ENCODE measurements at regions of chr15 and their contacts with region 1.

Region 1: GRCh38 chr15:65792130-65792987 is at the start of gene DENND4A:
- DNase-seq: peak; percentile 95 to 99 (median 98)
- ATAC-seq: peak; percentile 91
- H3K4me3 ChIP-seq: peak within 1 kb of the TSS; percentile 91
- H3K4me3 Mint-ChIP-seq: peak within 1 kb of the TSS; percentile 89 to 99 (median 93)
- H3K27ac ChIP-seq: peak within 1 kb of the TSS; percentile 99
- H3K27ac Mint-ChIP-seq: peak within 1 kb of the TSS; percentile 94 to 100 (median 98)
- H3K4me1 ChIP-seq: peaks cover 24 to 33% of the 10 kb centered on the region in 2 donors
- H3K4me1 Mint-ChIP-seq: peaks cover 18 to 66% (median 49%) of the 10 kb centered on the region in 7 donors
- H3K27me3 ChIP-seq: no peaks in the 10 kb centered on the region
- H3K27me3 Mint-ChIP-seq: no peaks in the 10 kb centered on the region
- total RNA-seq, gene DENND4A: 40.0 to 67.9 (median 64.6) TPM

Region 2: DNA sequence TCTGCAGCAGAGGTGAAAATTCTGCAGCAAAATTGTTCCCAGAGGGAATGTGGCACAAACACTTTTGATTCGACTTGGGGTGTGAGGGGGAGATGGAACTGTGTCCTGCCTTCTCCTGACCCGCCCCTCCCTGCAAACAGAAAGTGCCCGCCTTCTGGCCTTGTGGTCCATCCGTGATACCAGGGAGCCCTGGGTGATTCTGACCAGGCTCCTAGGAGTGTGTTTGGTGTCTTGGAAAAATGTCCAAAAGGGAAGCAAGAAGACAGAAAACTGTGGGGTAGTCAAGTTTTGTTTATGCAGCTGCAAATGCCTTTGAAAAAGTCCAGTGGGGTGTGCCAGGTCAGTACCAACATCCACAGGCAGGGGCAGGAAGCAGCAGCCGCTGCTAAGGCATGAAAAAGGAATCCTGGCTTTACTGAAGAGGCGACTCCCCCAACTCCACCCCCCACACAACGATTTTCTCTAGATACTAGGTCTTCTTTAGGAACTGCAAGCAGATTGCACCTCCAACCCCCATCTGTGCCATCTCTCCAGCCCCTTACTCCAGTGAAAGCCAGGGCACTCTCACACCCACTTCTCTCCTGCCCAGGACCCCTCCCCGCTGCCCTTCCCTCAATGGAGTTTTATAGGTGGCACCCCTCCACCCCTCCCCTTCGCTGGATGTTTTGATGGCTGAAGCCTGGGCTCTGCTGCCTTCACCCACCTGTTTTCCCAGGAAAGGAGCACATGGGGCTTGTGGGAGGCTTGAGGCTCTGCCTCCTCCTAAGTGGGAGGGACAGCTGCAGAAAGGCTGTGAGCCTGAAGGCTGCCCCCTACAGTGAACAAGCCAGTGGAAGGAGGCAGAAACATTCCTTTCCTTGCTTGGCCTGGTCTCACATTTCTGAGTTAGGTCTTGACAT is 1876.2 kb before region 1 on chr15:
- CTCF ChIA-PET with region 1: no interaction called
- POLR2A ChIA-PET with region 1: no interaction called
- intact Hi-C with region 1: no loop called
- DNase-seq: no peak
- ATAC-seq: no peak
- H3K4me3 ChIP-seq: no peak overlapping the region
- H3K4me3 Mint-ChIP-seq: no peak overlapping the region
- H3K27ac ChIP-seq: no peak overlapping the region
- H3K27ac Mint-ChIP-seq: peak overlapping the region in 1 of 9 donors; percentile 88
- H3K4me1 ChIP-seq: peaks cover 0 to 16% of the 10 kb centered on the region in 2 donors
- H3K4me1 Mint-ChIP-seq: peaks cover 11 to 26% (median 15%) of the 10 kb centered on the region in 7 donors
- H3K27me3 ChIP-seq: no peaks in the 10 kb centered on the region
- H3K27me3 Mint-ChIP-seq: peaks cover 0 to 8% (median 0%) of the 10 kb centered on the region in 5 donors

Region 3: DNA sequence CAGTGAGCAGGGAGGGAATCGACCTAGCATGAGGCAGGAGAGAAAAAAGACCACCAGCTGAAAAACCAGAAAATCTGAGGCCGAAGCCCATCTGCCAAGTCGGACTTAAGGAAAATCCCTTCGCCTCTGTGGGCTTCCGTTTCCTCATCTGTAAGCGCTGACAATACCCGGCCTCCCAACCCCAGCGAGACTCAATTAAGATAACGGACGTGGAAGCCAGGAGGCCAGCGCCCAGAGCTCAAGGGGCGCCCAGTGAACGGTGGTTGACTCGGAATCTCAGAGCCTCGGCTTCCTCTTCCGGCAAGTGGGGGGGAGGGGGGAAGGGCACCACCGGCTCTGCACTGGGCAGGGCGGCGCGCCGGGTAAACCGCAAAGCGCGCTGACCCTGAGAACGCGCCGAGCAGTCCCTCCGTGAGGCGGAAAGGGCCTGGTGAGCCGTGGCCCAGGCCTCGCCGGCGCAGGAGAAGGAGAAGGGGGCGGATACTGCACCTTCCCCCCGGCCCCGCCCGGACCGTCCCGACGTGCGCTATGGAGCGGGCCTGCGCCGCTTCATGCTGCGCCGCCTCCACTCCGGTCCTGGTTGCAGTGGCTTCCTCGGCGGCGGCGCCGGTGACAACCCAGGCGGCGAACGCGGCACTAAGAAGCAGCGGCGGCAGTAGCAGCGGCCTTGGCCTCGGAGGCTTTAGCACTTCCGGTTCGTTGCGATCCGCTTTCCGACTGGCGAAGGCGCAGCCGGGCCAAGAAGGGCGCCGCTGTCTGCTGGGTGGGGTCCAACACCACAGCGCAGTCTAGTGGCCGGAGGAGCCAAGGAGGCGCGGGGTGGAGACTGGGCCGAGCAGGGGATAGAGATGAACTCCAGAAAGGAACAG is 275.1 kb before region 1 on chr15 and contains the start of gene DPP8:
- CTCF ChIA-PET with region 1: no interaction called
- POLR2A ChIA-PET with region 1: no interaction called
- intact Hi-C with region 1: loop called in 1 of 2 experiments (anchors 1 kb)
- DNase-seq: peak; percentile 88 to 96 (median 92)
- ATAC-seq: peak; percentile 98
- H3K4me3 ChIP-seq: peak within 1 kb of the TSS; percentile 75
- H3K4me3 Mint-ChIP-seq: peak within 1 kb of the TSS; percentile 93 to 100 (median 96)
- H3K27ac ChIP-seq: peak within 1 kb of the TSS; percentile 83
- H3K27ac Mint-ChIP-seq: peak within 1 kb of the TSS; percentile 86 to 99 (median 94)
- H3K4me1 ChIP-seq: peaks cover 22 to 25% of the 10 kb centered on the region in 2 donors
- H3K4me1 Mint-ChIP-seq: peaks cover 30 to 51% (median 44%) of the 10 kb centered on the region in 7 donors
- H3K27me3 ChIP-seq: no peaks in the 10 kb centered on the region
- H3K27me3 Mint-ChIP-seq: no peaks in the 10 kb centered on the region
- total RNA-seq, gene DPP8: 38.4 to 54.6 (median 40.8) TPM

Region 4: GRCh38 chr15:65757256-65757655 is 35.1 kb before region 1 on chr15:
- CTCF ChIA-PET with region 1: no interaction called
- POLR2A ChIA-PET with region 1: interaction called, 6 read pairs
- intact Hi-C with region 1: loop called in 1 of 2 experiments (anchors 5 kb)
- DNase-seq: no peak
- ATAC-seq: no peak
- H3K4me3 ChIP-seq: no peak overlapping the region
- H3K4me3 Mint-ChIP-seq: no peak overlapping the region
- H3K27ac ChIP-seq: no peak overlapping the region
- H3K27ac Mint-ChIP-seq: no peak overlapping the region
- H3K4me1 ChIP-seq: peaks cover 4 to 5% of the 10 kb centered on the region in 2 donors
- H3K4me1 Mint-ChIP-seq: peaks cover 3 to 21% (median 17%) of the 10 kb centered on the region in 7 donors
- H3K27me3 ChIP-seq: no peaks in the 10 kb centered on the region
- H3K27me3 Mint-ChIP-seq: no peaks in the 10 kb centered on the region

Region 5: DNA sequence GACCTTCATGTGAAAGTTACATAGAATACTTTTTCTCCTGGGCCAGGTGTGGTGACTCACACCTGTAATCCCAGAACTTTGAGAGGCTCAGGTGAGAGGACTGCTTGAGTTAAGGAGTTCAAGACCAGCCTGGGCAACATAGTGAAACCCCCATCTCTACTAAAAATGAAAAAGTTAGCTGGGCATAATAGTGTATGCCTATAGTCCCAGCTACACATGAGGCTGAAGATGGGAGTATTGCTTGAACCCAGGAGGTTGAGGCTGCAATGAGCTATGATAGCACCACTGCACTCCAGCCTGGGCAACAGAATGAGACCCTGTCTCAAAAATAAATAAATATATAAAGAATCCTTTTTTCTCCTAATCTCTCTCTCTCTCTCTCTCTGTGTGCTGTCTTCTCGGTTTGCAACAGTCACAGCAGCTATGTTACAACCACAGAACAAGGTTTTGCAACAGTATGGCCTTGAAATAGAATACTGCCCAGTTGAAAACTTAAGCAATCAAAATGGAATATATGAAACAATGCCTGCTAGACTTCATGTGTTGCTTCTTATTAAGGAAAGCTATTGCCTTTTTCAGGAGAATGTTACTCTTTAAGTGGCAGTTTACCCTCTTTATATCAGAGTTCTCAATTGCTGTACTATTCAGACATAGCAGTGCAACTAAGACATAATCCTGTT is 12.0 kb after region 1 on chr15:
- CTCF ChIA-PET with region 1: interaction called, 7 read pairs
- POLR2A ChIA-PET with region 1: interaction called, 47 read pairs
- intact Hi-C with region 1: loop called in 1 of 2 experiments (anchors 1 kb)
- DNase-seq: no peak
- ATAC-seq: peak; percentile 67
- H3K4me3 ChIP-seq: no peak overlapping the region
- H3K4me3 Mint-ChIP-seq: no peak overlapping the region
- H3K27ac ChIP-seq: no peak overlapping the region
- H3K27ac Mint-ChIP-seq: peak overlapping the region in 6 of 9 donors; percentile 1 to 98 (median 80)
- H3K4me1 ChIP-seq: peaks cover 20 to 27% of the 10 kb centered on the region in 2 donors
- H3K4me1 Mint-ChIP-seq: peaks cover 4 to 42% (median 35%) of the 10 kb centered on the region in 7 donors
- H3K27me3 ChIP-seq: no peaks in the 10 kb centered on the region
- H3K27me3 Mint-ChIP-seq: no peaks in the 10 kb centered on the region

Region 6: GRCh38 chr15:65818927-65819562 is 26.7 kb after region 1 on chr15:
- CTCF ChIA-PET with region 1: interaction called, 7 read pairs
- POLR2A ChIA-PET with region 1: interaction called, 50 read pairs
- intact Hi-C with region 1: loop called (anchors 1 kb)
- DNase-seq: peak in 7 of 9 donors; percentile 75 to 95 (median 90)
- ATAC-seq: peak; percentile 95
- H3K4me3 ChIP-seq: peak overlapping the region; percentile 9
- H3K4me3 Mint-ChIP-seq: peak overlapping the region; percentile 21 to 83 (median 76)
- H3K27ac ChIP-seq: peak overlapping the region; percentile 91
- H3K27ac Mint-ChIP-seq: peak overlapping the region; percentile 93 to 100 (median 98)
- H3K4me1 ChIP-seq: peaks cover 23 to 39% of the 10 kb centered on the region in 2 donors
- H3K4me1 Mint-ChIP-seq: peaks cover 33 to 69% (median 52%) of the 10 kb centered on the region in 7 donors
- H3K27me3 ChIP-seq: no peaks in the 10 kb centered on the region
- H3K27me3 Mint-ChIP-seq: no peaks in the 10 kb centered on the region

Region 7: DNA sequence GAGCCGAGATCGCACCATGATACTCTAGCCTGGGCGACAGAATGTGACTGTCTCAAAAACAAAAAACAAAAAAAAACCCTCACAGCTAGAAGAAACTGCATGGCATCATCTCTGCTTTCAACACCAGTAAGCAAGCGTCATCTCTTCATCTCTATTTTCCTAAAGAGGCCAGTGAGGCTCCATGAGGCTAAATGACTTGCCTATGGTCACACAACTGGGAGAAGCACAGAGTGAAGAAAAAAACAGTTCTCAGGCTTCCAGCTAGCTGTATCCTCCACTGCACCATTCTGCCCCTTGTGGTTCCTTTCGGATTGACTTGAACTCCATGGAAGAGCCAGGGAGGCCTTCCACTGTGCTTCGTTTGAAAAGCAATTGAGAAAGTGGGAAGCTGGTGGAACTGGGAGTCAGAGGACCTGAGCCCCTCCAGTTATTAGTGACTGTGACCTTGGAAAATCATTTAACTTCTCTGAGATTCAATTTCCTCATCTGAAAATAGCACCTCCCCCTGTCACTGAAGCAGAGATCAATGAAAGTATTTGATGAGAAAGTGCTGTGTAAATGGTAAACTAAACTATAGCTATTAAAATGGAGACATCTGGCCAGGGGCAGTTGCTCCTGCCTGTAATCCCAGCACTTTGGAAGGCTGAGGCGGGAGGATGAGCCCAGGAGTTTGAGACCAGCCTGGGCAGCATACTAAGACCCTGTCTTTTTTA is 31.8 kb after region 1 on chr15:
- CTCF ChIA-PET with region 1: interaction called, 6 read pairs
- POLR2A ChIA-PET with region 1: interaction called, 50 read pairs
- intact Hi-C with region 1: loop called (anchors 1 kb)
- DNase-seq: peak in 1 of 9 donors; percentile 34
- ATAC-seq: no peak
- H3K4me3 ChIP-seq: no peak overlapping the region
- H3K4me3 Mint-ChIP-seq: no peak overlapping the region
- H3K27ac ChIP-seq: no peak overlapping the region
- H3K27ac Mint-ChIP-seq: peak overlapping the region in 7 of 9 donors; percentile 10 to 78 (median 50)
- H3K4me1 ChIP-seq: peaks cover 33 to 47% of the 10 kb centered on the region in 2 donors
- H3K4me1 Mint-ChIP-seq: peaks cover 42 to 77% (median 56%) of the 10 kb centered on the region in 7 donors
- H3K27me3 ChIP-seq: no peaks in the 10 kb centered on the region
- H3K27me3 Mint-ChIP-seq: no peaks in the 10 kb centered on the region

Region 8: GRCh38 chr15:65856821-65857455 is 64.6 kb after region 1 on chr15:
- CTCF ChIA-PET with region 1: interaction called, 3 read pairs
- POLR2A ChIA-PET with region 1: no interaction called
- intact Hi-C with region 1: loop called in 1 of 2 experiments (anchors 1 kb)
- DNase-seq: peak; percentile 54 to 83 (median 77)
- ATAC-seq: peak; percentile 94
- H3K4me3 ChIP-seq: no peak overlapping the region
- H3K4me3 Mint-ChIP-seq: no peak overlapping the region
- H3K27ac ChIP-seq: no peak overlapping the region
- H3K27ac Mint-ChIP-seq: peak overlapping the region in 2 of 9 donors; percentile 21 to 69
- H3K4me1 ChIP-seq: no peaks in the 10 kb centered on the region
- H3K4me1 Mint-ChIP-seq: peaks cover 0 to 17% (median 13%) of the 10 kb centered on the region in 7 donors
- H3K27me3 ChIP-seq: no peaks in the 10 kb centered on the region
- H3K27me3 Mint-ChIP-seq: peaks cover 0 to 15% (median 0%) of the 10 kb centered on the region in 5 donors

Region 9: GRCh38 chr15:67240235-67241131 is 1448.1 kb after region 1 on chr15:
- CTCF ChIA-PET with region 1: no interaction called
- POLR2A ChIA-PET with region 1: no interaction called
- intact Hi-C with region 1: no loop called
- DNase-seq: peak in 3 of 9 donors; percentile 9 to 30 (median 12)
- ATAC-seq: peak; percentile 70
- H3K4me3 ChIP-seq: peak overlapping the region; percentile 23
- H3K4me3 Mint-ChIP-seq: peak overlapping the region in 9 of 10 donors; percentile 18 to 71 (median 45)
- H3K27ac ChIP-seq: no peak overlapping the region
- H3K27ac Mint-ChIP-seq: peak overlapping the region in 8 of 9 donors; percentile 46 to 88 (median 70)
- H3K4me1 ChIP-seq: peaks cover 16 to 34% of the 10 kb centered on the region in 2 donors
- H3K4me1 Mint-ChIP-seq: peaks cover 34 to 67% (median 56%) of the 10 kb centered on the region in 7 donors
- H3K27me3 ChIP-seq: no peaks in the 10 kb centered on the region
- H3K27me3 Mint-ChIP-seq: no peaks in the 10 kb centered on the region

Measured in naive thymus-derived CD4-positive, alpha-beta T cell (primary cell).